Prostate gland (tissue), 2 donors: ENCODE measurements at regions of chr5 and their contacts with region 1.

Region 1: DNA sequence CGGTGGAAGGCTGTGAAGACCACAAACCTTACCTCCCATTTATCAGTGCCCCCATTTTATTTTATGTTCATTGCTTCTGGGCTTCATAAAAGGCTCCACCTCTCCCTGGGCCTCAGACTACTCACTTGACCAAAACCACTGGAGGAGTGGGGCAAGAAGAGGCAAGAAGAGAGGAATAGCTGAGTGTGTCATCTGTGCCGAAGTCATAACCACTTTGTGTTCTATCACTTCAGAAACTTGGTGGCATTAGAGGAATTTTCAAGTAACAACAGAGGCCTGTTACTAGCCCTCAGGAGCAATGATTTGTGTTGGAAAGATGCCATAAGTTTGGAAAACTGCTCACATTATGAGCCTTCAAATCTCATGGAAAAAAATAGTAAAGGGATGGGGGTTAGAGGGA is 88.7 kb upstream of the PIK3R1 start:
- DNase-seq: no peak
- H3K4me3 ChIP-seq: no peak overlapping the region
- H3K27ac ChIP-seq: no peak overlapping the region
- H3K4me1 ChIP-seq: no peaks in the 10 kb centered on the region
- H3K27me3 ChIP-seq: no peaks in the 10 kb centered on the region
- CTCF ChIP-seq: no peak
- POLR2A ChIP-seq: no peak

Region 2: DNA sequence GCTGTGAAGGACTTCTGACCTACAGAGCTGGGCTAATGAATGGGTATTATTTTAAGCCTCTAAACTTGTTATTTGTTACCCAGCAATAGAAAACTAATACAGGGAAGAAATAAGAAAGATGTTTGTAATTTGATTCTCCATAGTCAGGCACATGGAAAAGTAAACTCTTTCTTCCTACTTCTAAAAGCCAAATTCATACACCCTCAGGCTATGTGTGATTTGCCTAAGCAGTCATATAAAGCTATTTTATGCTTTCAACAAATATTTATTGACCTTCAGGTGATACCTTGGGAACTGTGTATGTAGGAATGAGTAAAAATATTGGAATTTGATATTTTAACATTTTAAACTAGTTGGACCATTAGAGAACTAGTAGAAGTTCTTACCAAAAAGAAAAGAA is 29.8 kb before region 1 on chr5:
- intact Hi-C with region 1: loop called (anchors 2 kb)
- DNase-seq: no peak
- H3K4me3 ChIP-seq: no peak overlapping the region
- H3K27ac ChIP-seq: no peak overlapping the region
- H3K4me1 ChIP-seq: no peaks in the 10 kb centered on the region
- H3K27me3 ChIP-seq: no peaks in the 10 kb centered on the region
- CTCF ChIP-seq: no peak
- POLR2A ChIP-seq: no peak